SK-N-SH (cell line): ENCODE measurements at regions of chr14 and their contacts with region 1.

Region 1: DNA sequence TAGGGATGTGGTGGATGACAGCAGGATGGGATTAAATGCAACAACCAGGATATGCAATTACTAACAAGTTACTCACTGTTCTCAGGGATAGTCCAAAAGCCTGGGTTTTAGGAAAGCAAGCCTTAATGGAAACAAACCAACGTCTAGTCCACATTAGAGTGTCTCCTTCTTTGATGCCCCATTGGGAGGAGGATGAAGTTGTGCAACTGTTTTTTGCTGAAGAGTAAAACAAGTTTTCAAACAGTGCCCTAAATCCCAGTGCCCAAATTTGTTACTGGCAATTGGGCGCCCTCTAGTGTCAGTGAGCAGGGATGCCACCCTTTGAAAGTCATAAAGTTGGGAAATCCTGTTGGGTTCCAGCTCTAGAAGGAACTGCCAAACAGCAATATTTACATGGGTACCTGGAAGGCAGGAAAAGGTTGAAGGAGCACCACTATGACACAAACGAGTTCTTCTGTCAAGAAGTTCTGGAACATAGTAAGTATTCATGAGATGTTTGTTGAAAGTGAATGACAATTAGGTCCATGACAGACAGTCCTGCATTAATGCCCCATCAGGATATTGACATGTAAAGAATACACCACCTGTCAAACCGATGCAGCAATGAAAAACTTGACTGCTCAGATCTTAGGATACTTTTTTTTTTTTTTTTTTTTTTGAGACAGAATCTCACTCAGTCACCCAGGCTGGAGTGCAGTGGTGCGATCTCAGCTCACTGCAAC is 11.1 kb upstream of the DPF3 start:
- DNase-seq: peak; percentile 65
- H3K4me3 ChIP-seq: no peak overlapping the region; a peak in 1 of 4 replicates
- H3K27ac ChIP-seq: no peak overlapping the region
- H3K4me1 ChIP-seq: peaks cover 0 to 33% of the 10 kb centered on the region in 2 experiments; a peak in 1 of 4 replicates
- H3K27me3 ChIP-seq: no peaks in the 10 kb centered on the region
- CTCF ChIP-seq: peak; percentile 96
- EP300 ChIP-seq: no peak
- RAD21 ChIP-seq: peak; percentile 96

Region 2: GRCh38 chr14:72510566-72510965 is 394.4 kb before region 1 on chr14:
- CTCF ChIA-PET with region 1: interaction called, 339 read pairs
- POLR2A ChIA-PET with region 1: no interaction called
- DNase-seq: no peak
- H3K4me3 ChIP-seq: no peak overlapping the region
- H3K27ac ChIP-seq: no peak overlapping the region
- H3K4me1 ChIP-seq: no peaks in the 10 kb centered on the region; a peak in 1 of 4 replicates
- H3K27me3 ChIP-seq: peaks cover 19% of the 10 kb centered on the region; the same call in 1 of the 2 replicates
- CTCF ChIP-seq: no peak
- EP300 ChIP-seq: no peak
- RAD21 ChIP-seq: no peak

Region 3: GRCh38 chr14:72544619-72545387 is 360.2 kb before region 1 on chr14:
- CTCF ChIA-PET with region 1: interaction called, 37 read pairs
- POLR2A ChIA-PET with region 1: no interaction called
- DNase-seq: no peak
- H3K4me3 ChIP-seq: no peak overlapping the region
- H3K27ac ChIP-seq: no peak overlapping the region
- H3K4me1 ChIP-seq: peaks cover 0 to 9% of the 10 kb centered on the region in 2 experiments; a peak in 1 of 4 replicates
- H3K27me3 ChIP-seq: no peaks in the 10 kb centered on the region; the same call in 1 of the 2 replicates
- CTCF ChIP-seq: no peak
- EP300 ChIP-seq: no peak
- RAD21 ChIP-seq: no peak

Region 4: DNA sequence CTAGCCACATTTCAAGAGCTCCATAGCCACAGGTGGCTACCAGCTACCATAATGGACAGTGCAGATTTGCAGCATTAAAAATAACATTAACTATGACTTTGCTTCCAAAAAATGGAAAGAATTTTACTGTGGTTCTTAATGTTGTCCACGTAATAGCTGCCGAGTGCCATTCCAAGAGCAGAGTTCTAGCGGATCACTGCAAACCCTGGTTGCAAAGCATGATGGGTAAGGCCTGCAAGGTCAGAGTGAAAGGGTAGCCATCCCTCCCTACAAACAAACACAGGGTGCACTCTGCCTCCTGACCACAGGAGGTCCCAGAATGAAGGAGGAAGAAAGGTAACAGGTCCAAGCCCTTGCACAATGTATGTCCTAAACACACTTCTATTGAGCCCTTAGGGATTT is 168.7 kb before region 1 on chr14:
- CTCF ChIA-PET with region 1: interaction called, 13 read pairs
- POLR2A ChIA-PET with region 1: no interaction called
- DNase-seq: peak; percentile 71
- H3K4me3 ChIP-seq: no peak overlapping the region; a peak in 1 of 4 replicates
- H3K27ac ChIP-seq: peak overlapping the region in 1 of 2 experiments; percentile 89; a peak in 2 of 4 replicates
- H3K4me1 ChIP-seq: peaks cover 23 to 54% of the 10 kb centered on the region in 2 experiments; a peak in 3 of 4 replicates
- H3K27me3 ChIP-seq: no peaks in the 10 kb centered on the region
- CTCF ChIP-seq: peak; percentile 28
- EP300 ChIP-seq: peak in 1 of 2 experiments; percentile 39; a peak in 1 of 4 replicates
- RAD21 ChIP-seq: peak; percentile 53

Region 5: GRCh38 chr14:72830786-72831594 is 74.0 kb before region 1 on chr14:
- CTCF ChIA-PET with region 1: no interaction called
- POLR2A ChIA-PET with region 1: no interaction called
- DNase-seq: no peak
- H3K4me3 ChIP-seq: no peak overlapping the region
- H3K27ac ChIP-seq: no peak overlapping the region
- H3K4me1 ChIP-seq: no peaks in the 10 kb centered on the region; a peak in 1 of 4 replicates
- H3K27me3 ChIP-seq: no peaks in the 10 kb centered on the region
- CTCF ChIP-seq: no peak
- EP300 ChIP-seq: no peak
- RAD21 ChIP-seq: no peak

Region 6: GRCh38 chr14:72920015-72920414 is 15.0 kb after region 1 on chr14:
- CTCF ChIA-PET with region 1: interaction called, 15 read pairs
- POLR2A ChIA-PET with region 1: no interaction called
- DNase-seq: no peak
- H3K4me3 ChIP-seq: no peak overlapping the region
- H3K27ac ChIP-seq: no peak overlapping the region
- H3K4me1 ChIP-seq: peaks cover 0 to 4% of the 10 kb centered on the region in 2 experiments; a peak in 1 of 4 replicates
- H3K27me3 ChIP-seq: no peaks in the 10 kb centered on the region
- CTCF ChIP-seq: peak; percentile 21; the same call in 1 of the 2 replicates
- EP300 ChIP-seq: no peak
- RAD21 ChIP-seq: no peak

Region 7: DNA sequence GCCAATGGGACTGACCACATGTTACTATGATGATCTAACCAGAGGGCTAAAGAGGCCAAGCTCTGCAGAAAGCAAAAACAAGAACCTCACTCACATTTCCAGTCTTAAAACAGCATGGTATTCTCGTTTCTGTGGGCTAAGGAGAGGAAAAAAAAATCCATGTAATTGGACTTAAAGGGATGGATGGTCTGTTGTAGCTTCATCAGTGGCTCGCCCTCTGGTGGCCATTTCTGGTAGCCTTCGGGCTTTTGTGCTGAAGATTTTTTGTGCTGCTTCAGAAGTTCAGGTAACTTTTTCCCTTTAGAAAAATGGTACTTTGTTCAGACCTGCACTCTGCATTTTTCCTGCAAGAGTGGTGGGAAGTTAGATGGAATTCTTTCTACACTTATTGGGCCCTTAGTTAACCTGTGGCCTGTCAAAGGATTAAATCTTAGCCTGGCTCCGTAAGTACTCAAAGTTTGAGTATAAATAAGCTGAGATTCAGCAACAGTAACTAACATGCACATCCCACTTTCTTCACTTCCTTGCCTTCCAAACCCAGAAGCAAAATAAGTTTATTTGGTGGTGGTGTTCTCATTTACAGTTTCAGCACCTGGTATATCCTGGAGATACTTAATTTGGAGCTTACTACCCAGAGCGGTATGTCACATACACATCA is 43.6 kb after region 1 on chr14:
- CTCF ChIA-PET with region 1: interaction called, 39 read pairs
- POLR2A ChIA-PET with region 1: no interaction called
- DNase-seq: peak; percentile 70
- H3K4me3 ChIP-seq: peak overlapping the region in 1 of 2 experiments; percentile 33; a peak in 1 of 4 replicates
- H3K27ac ChIP-seq: no peak overlapping the region
- H3K4me1 ChIP-seq: no peaks in the 10 kb centered on the region
- H3K27me3 ChIP-seq: no peaks in the 10 kb centered on the region
- CTCF ChIP-seq: peak; percentile 94
- EP300 ChIP-seq: no peak
- RAD21 ChIP-seq: peak; percentile 74

Region 8: GRCh38 chr14:73091852-73092251 is 186.9 kb after region 1 on chr14:
- CTCF ChIA-PET with region 1: no interaction called
- POLR2A ChIA-PET with region 1: no interaction called
- DNase-seq: no peak
- H3K4me3 ChIP-seq: no peak overlapping the region
- H3K27ac ChIP-seq: no peak overlapping the region
- H3K4me1 ChIP-seq: no peaks in the 10 kb centered on the region; a peak in 1 of 4 replicates
- H3K27me3 ChIP-seq: no peaks in the 10 kb centered on the region
- CTCF ChIP-seq: no peak
- EP300 ChIP-seq: no peak
- RAD21 ChIP-seq: no peak

Region 9: DNA sequence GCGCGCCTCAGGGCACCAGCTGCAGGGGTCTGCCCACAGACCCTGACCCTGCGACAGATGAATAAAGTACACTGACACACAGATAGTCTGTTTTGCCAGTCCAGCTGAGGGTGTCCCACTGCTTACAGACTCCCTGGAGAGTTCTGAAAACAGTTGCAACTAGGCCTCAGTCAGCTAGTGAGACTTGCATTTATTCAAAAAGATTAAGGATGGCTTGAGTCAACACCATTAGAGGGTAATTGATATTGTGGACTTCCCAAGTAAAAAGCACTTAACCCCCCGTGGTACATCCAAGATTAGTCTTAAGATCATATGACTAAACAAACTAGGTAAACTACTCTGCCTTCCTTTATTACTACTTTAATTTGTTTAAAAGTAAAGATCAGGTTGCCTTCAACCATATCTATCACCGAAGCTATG is 220.2 kb after region 1 on chr14:
- CTCF ChIA-PET with region 1: no interaction called
- POLR2A ChIA-PET with region 1: no interaction called
- DNase-seq: no peak
- H3K4me3 ChIP-seq: no peak overlapping the region
- H3K27ac ChIP-seq: no peak overlapping the region
- H3K4me1 ChIP-seq: no peaks in the 10 kb centered on the region
- H3K27me3 ChIP-seq: no peaks in the 10 kb centered on the region
- CTCF ChIP-seq: no peak
- EP300 ChIP-seq: no peak
- RAD21 ChIP-seq: no peak